H1 (cell line): ENCODE measurements at regions of chr15 and their contacts with region 1.

Region 1: GRCh38 chr15:46260937-46261336 is 626.1 kb downstream of the SQOR start:
- DNase-seq: peak in 1 of 2 experiments; percentile 34
- H3K4me3 ChIP-seq: no peak overlapping the region
- H3K27ac ChIP-seq: no peak overlapping the region
- H3K4me1 ChIP-seq: no peaks in the 10 kb centered on the region; a peak in 1 of 7 replicates
- H3K27me3 ChIP-seq: no peaks in the 10 kb centered on the region
- CTCF ChIP-seq: peak; percentile 63 to 71 (median 63)
- EP300 ChIP-seq: no peak
- POLR2A ChIP-seq: no peak
- RAD21 ChIP-seq: peak; percentile 70 to 75

Region 2: DNA sequence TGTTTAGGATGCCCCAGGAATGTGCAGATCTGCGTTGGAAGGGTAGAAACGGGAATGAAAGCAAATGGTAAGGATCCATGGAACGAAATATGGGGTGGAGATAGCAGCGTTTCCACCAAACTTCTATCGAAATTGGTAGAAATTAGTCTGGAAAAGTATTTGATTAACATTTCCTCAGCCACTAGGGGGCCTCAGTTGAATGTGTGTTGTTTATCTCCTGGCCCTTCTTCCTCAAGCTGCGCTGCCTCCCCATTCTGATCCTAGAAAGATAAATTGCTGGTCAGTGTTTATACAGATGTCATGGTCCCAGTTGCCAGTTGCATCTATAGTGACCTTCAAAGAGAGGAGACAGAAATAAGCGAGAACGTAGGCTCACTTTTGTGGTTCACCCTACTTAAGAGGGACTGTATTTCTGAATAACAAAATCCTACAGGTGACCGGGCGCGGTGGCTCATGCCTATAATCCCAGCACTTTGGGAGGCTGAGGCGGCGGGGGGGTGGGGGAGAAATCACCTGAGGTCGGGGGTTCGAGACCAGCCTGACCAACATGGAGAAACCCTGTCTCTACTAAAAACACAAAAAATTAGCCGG is 169.0 kb before region 1 on chr15:
- CTCF ChIA-PET with region 1: interaction called, 24 read pairs
- POLR2A ChIA-PET with region 1: no interaction called
- DNase-seq: peak; percentile 15 to 59
- H3K4me3 ChIP-seq: no peak overlapping the region
- H3K27ac ChIP-seq: no peak overlapping the region
- H3K4me1 ChIP-seq: no peaks in the 10 kb centered on the region
- H3K27me3 ChIP-seq: no peaks in the 10 kb centered on the region
- CTCF ChIP-seq: peak in 2 of 3 experiments; percentile 67 to 72; a peak in 3 of 4 replicates
- EP300 ChIP-seq: no peak
- POLR2A ChIP-seq: no peak
- RAD21 ChIP-seq: peak; percentile 87 to 89